Transverse colon (tissue), 4 donors: ENCODE measurements at regions of chr5 and their contacts with region 1.

Region 1: DNA sequence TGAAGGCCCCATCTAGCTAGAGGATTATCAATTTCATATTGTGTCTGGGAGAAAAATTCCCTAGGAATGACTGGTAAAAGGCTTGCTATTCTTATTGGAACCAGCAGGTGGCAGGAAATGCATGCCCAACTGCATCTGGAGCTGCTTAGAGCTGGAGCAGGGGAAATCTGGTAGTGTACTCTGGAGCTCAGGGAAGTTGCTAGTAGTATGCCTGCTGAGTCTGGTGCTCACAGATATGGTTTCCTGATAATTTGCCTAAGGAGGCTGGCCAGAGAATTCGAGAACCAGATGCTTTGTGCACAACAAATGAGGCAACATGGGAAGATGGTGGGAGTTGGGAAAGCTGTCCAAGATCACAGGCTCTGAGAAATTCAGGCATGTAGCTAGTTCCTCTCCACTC is 53.7 kb downstream of the G3BP1 start:
- DNase-seq: peak; percentile 57
- H3K4me3 ChIP-seq: no peak overlapping the region
- H3K27ac ChIP-seq: no peak overlapping the region
- H3K4me1 ChIP-seq: peaks cover 0 to 4% (median 1%) of the 10 kb centered on the region in 4 donors
- H3K27me3 ChIP-seq: no peaks in the 10 kb centered on the region
- CTCF ChIP-seq: peak; percentile 78 to 88 (median 79)
- EP300 ChIP-seq: no peak
- POLR2A ChIP-seq: no peak

Region 2: GRCh38 chr5:151534350-151534749 is 291.1 kb before region 1 on chr5:
- in situ Hi-C with region 1: no loop called
- intact Hi-C with region 1: no loop called
- DNase-seq: no peak
- H3K4me3 ChIP-seq: no peak overlapping the region
- H3K27ac ChIP-seq: no peak overlapping the region
- H3K4me1 ChIP-seq: no peaks in the 10 kb centered on the region
- H3K27me3 ChIP-seq: no peaks in the 10 kb centered on the region
- CTCF ChIP-seq: no peak
- EP300 ChIP-seq: no peak
- POLR2A ChIP-seq: no peak

Region 3: DNA sequence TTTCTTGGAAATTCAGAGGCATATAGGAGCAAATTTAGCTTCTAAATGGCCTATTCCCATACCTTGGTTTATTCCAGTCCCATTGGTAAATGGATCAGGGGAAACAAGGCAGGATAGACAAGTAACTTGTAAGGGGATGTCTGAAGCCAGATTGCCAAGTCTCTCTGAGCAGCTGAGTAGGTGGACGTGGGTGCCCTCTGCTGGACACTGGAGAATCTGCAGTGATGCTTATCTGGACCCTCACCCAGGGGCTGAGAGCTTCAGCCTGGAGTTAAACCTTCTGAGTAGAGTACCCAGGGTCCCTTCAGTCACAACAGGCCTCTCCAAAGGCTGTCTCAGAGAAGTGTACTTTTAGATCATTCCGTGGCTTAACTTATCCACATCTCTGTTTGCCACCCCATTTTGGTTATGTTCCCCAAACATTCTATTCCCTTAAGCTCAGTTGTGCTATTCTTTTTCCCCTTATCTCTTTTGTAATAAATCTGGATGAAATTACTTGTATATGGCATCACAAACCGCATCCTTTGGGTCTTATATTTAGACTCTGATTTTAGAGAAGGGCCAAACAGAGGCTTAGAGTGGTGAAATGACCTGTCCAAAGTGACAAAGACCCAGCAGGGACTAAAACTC is 317.5 kb after region 1 on chr5:
- in situ Hi-C with region 1: loop called (anchors 5 to 25 kb)
- intact Hi-C with region 1: loop called (anchors 10 kb)
- DNase-seq: peak; percentile 35
- H3K4me3 ChIP-seq: no peak overlapping the region
- H3K27ac ChIP-seq: no peak overlapping the region
- H3K4me1 ChIP-seq: no peaks in the 10 kb centered on the region
- H3K27me3 ChIP-seq: no peaks in the 10 kb centered on the region
- CTCF ChIP-seq: peak; percentile 66 to 83 (median 74)
- EP300 ChIP-seq: no peak
- POLR2A ChIP-seq: no peak

Region 4: DNA sequence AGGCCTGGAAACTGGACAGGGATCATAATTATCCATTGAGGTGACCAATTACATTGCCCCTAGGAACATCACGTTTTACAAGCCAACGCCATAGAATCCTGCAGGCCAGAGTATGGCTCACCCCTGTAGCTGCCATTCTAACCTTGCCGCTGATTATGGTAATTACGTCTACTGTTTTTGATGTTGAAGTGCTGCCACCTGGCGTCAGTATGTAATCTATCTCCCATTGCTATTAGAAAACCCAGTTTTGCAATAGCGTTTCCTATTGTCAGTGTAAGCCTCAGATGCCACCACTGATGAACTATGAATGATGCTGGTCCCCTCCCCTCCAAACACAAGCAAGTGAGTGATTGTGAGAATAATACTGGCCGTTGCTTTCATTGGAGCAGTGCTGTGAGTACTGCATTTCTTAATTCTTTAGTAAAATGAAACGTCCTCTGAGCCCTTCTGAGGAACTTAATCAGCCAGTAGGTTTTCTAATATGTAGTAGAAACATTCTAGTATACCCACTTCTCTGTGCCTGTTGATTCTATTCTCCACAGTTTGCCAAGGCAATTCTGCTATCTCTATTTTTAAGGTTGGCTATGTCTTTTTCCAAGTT is 680.1 kb after region 1 on chr5:
- in situ Hi-C with region 1: loop called in 3 of 4 experiments (anchors 10 to 25 kb)
- intact Hi-C with region 1: no loop called
- DNase-seq: peak; percentile 57
- H3K4me3 ChIP-seq: no peak overlapping the region
- H3K27ac ChIP-seq: no peak overlapping the region
- H3K4me1 ChIP-seq: no peaks in the 10 kb centered on the region
- H3K27me3 ChIP-seq: peaks cover 4% of the 10 kb centered on the region
- CTCF ChIP-seq: peak; percentile 44 to 55 (median 53)
- EP300 ChIP-seq: no peak
- POLR2A ChIP-seq: no peak